Mammary epithelial cell (primary cell): ENCODE measurements at regions of chr2 and their contacts with region 1.

Region 1: GRCh38 chr2:43131024-43131889 is 95.1 kb downstream of the ZFP36L2 start:
- DNase-seq: peak; percentile 99
- H3K4me3 ChIP-seq: no peak overlapping the region
- H3K27ac ChIP-seq: peak overlapping the region; percentile 89
- H3K4me1 ChIP-seq: peaks cover 33% of the 10 kb centered on the region
- H3K27me3 ChIP-seq: no peaks in the 10 kb centered on the region
- CTCF ChIP-seq: peak; percentile 34 to 53

Region 2: DNA sequence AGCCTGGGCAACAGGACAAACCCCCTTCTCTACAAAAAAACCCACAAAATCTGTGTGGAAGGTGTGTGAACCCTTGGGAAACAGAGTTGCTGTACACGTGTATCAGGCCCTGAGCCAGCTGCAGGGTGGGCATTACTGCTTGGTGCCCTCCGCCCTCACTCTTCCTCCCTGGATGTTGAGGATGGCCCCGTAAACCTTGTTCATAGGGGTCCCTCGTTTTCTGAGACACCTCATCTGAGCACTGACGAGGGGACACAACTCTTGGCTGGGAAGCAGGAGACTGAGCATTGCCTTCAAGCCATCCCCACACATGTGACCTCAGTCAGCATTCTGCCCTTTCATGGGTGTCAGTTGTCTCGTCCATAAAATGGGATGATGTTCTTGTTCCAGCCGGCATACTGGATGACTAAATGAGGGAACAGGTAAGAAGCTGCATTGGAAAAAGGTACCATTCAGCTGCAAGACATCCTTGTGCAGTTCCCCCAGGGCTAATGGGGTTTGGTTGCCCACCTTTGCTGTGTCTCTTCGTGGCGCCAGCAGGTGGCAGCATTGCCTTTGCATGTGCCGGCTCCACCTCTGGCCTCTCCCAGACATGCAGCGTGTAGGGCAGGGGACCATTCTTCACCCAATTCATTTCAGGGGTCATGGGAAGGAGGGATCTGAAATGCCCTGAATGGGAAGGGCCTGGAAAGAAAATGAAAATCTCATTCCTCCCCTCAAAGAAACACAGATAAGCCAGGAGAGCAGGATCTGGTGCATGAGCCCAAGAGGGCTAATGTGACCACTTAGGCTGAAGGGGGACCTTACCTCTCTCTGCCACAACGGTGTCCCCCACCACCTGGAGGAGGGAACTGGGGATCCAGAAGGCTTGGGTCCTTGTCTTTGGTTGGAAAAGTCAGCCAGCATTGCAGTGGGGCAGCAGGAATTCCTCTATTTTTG is 302.5 kb before region 1 on chr2:
- CTCF ChIA-PET with region 1: no interaction called
- dilution Hi-C with region 1: no loop called
- in situ Hi-C with region 1: no loop called
- intact Hi-C with region 1: loop called (anchors 1 kb)
- DNase-seq: peak; percentile 58
- H3K4me3 ChIP-seq: no peak overlapping the region
- H3K27ac ChIP-seq: no peak overlapping the region
- H3K4me1 ChIP-seq: peaks cover 18% of the 10 kb centered on the region
- H3K27me3 ChIP-seq: no peaks in the 10 kb centered on the region
- CTCF ChIP-seq: peak; percentile 90

Region 3: GRCh38 chr2:42905341-42906110 is 225.7 kb before region 1 on chr2:
- CTCF ChIA-PET with region 1: no interaction called
- dilution Hi-C with region 1: no loop called
- in situ Hi-C with region 1: no loop called
- intact Hi-C with region 1: no loop called
- DNase-seq: no peak
- H3K4me3 ChIP-seq: no peak overlapping the region
- H3K27ac ChIP-seq: no peak overlapping the region
- H3K4me1 ChIP-seq: peaks cover 13% of the 10 kb centered on the region
- H3K27me3 ChIP-seq: no peaks in the 10 kb centered on the region
- CTCF ChIP-seq: no peak

Region 4: DNA sequence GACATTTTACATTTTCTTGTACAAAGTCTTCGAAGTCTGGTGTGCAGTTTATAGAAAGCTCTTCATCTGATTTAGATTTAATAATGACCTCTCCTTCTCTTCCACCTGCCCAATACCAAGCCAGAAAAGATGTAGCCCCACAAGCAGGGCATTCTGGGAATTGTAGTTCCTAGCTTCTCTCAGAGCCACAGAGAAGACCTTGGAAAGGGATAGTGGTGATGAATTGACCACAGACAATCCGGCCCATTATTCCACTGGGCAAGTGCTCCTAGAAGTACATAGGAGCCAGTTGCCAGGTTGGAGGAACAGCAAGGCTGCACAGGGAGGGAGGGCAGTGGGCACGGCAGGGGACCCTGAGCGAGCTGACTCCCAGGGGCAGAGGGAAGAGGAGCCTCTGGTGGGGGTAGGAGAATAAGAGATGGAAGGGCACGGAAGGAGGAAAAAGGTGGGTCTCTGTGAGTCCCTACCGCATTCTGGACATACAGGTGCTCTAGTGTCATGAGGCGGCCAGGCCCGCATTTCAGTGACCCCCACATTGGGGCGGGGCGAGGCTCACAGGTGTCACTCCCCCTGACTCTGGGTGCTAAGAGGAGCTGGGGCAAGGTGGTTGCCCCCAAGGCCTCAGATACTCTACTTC is 186.4 kb before region 1 on chr2:
- CTCF ChIA-PET with region 1: no interaction called
- dilution Hi-C with region 1: no loop called
- in situ Hi-C with region 1: no loop called
- intact Hi-C with region 1: loop called (anchors 1 kb)
- DNase-seq: peak; percentile 59
- H3K4me3 ChIP-seq: no peak overlapping the region
- H3K27ac ChIP-seq: no peak overlapping the region
- H3K4me1 ChIP-seq: peaks cover 5% of the 10 kb centered on the region
- H3K27me3 ChIP-seq: no peaks in the 10 kb centered on the region
- CTCF ChIP-seq: no peak

Region 5: DNA sequence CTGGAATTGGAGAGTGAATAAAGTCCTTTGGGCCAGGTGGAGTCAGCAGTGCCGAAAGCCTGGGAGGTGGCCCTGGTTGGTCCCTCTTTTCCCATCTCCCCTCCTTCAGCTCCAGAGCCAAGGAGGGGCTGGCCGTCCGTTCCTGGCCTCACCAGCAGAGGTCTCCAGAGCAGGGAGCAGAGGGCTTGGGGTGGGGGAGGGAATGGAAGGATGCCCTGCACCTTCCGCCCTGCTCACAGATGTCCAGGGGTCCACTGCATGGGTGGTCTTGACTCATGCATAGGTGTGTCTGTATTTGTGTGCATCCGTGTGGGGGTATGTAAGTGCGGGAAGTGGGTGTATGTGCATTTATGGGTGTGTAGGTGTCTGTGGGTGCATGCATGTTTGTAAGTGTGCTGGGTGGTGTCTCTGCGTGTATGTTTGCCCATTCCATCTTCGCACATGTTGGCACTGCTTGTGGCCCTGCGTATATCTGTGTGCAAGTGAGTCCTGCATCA is 106.7 kb before region 1 on chr2:
- CTCF ChIA-PET with region 1: no interaction called
- dilution Hi-C with region 1: no loop called
- in situ Hi-C with region 1: no loop called
- intact Hi-C with region 1: loop called (anchors 1 kb)
- DNase-seq: no peak
- H3K4me3 ChIP-seq: no peak overlapping the region
- H3K27ac ChIP-seq: no peak overlapping the region
- H3K4me1 ChIP-seq: peaks cover 18% of the 10 kb centered on the region
- H3K27me3 ChIP-seq: no peaks in the 10 kb centered on the region
- CTCF ChIP-seq: peak; percentile 63 to 87

Region 6: GRCh38 chr2:43086451-43087221 is 44.6 kb before region 1 on chr2:
- CTCF ChIA-PET with region 1: no interaction called
- dilution Hi-C with region 1: no loop called
- in situ Hi-C with region 1: no loop called
- intact Hi-C with region 1: loop called (anchors 1 kb)
- DNase-seq: peak; percentile 99
- H3K4me3 ChIP-seq: no peak overlapping the region
- H3K27ac ChIP-seq: peak overlapping the region; percentile 94
- H3K4me1 ChIP-seq: peaks cover 70% of the 10 kb centered on the region
- H3K27me3 ChIP-seq: no peaks in the 10 kb centered on the region
- CTCF ChIP-seq: no peak

Region 7: GRCh38 chr2:43484323-43484930 is 353.2 kb after region 1 on chr2:
- CTCF ChIA-PET with region 1: interaction called, 3 read pairs
- dilution Hi-C with region 1: no loop called
- in situ Hi-C with region 1: no loop called
- intact Hi-C with region 1: loop called (anchors 1 kb)
- DNase-seq: peak; percentile 50
- H3K4me3 ChIP-seq: no peak overlapping the region
- H3K27ac ChIP-seq: no peak overlapping the region
- H3K4me1 ChIP-seq: peaks cover 9% of the 10 kb centered on the region
- H3K27me3 ChIP-seq: no peaks in the 10 kb centered on the region
- CTCF ChIP-seq: peak; percentile 45 to 51